CD4-positive, alpha-beta T cell (primary cell): ENCODE measurements at regions of chr3 and their contacts with region 1.

Region 1: GRCh38 chr3:158790901-158791589 is 10.8 kb upstream of the MFSD1 start:
- DNase-seq: peak in 7 of 14 experiments; percentile 5 to 79 (median 49)
- ATAC-seq: peak; percentile 79
- H3K4me3 ChIP-seq: no peak overlapping the region
- H3K4me3 Mint-ChIP-seq: no peak overlapping the region
- H3K27ac ChIP-seq: no peak overlapping the region
- H3K27ac Mint-ChIP-seq: no peak overlapping the region
- H3K4me1 ChIP-seq: no peaks in the 10 kb centered on the region
- H3K4me1 Mint-ChIP-seq: no peaks in the 10 kb centered on the region
- H3K27me3 ChIP-seq: no peaks in the 10 kb centered on the region
- H3K27me3 Mint-ChIP-seq: no peaks in the 10 kb centered on the region
- CTCF ChIP-seq: peak; percentile 91

Region 2: DNA sequence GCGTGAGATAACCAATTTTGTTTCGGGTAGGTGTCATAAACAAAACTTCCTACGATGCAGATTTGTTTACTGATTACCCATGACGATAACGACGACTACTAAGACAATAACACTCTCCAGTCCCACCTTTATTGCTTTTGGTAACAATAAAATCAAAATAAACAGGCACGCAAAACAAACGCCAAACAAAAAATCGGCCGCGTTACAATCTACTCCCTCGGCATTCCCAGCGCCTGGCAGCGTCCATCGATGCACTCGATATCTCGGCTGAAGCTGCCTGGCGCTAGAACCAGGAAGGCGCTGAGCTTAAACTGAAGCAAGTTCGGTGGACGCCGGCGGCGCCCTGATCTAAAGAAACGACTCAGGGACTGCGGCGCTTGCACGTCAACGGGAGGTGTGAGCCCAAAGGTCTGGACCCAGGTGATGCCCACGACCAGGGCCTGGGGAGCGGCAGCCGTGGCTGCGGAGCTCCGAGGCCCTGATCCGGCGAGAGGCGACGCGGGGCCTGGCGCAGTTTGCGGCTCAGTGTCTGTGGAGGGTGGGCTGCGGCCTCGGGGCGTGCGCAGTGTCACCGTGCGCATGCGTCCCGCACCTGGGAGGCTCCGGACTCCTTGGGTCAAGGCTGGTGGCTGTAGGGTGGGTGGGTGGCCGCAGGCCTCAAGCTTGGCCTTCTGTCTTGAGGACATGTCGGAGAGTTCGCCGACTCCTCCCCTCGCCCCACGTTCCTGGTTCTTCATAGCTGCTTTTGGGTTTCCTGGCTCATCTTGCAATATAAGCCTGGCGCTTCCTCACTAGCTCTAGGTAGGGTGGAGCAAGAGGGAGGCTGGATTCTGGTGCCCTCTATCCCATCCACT is 681.0 kb before region 1 on chr3 and contains the start of gene RSRC1:
- CTCF ChIA-PET with region 1: no interaction called
- POLR2A ChIA-PET with region 1: no interaction called
- intact Hi-C with region 1: loop called in 1 of 2 experiments (anchors 5 kb)
- DNase-seq: peak; percentile 62 to 89 (median 70)
- ATAC-seq: peak; percentile 87
- H3K4me3 ChIP-seq: peak within 1 kb of the TSS; percentile 80
- H3K4me3 Mint-ChIP-seq: peak within 1 kb of the TSS; percentile 96
- H3K27ac ChIP-seq: no peak within 1 kb of the TSS
- H3K27ac Mint-ChIP-seq: peak within 1 kb of the TSS; percentile 72
- H3K4me1 ChIP-seq: peaks cover 35% of the 10 kb centered on the region
- H3K4me1 Mint-ChIP-seq: peaks cover 79% of the 10 kb centered on the region
- H3K27me3 ChIP-seq: peaks cover 35 to 45% of the 10 kb centered on the region in 2 experiments
- H3K27me3 Mint-ChIP-seq: peaks cover 46% of the 10 kb centered on the region
- CTCF ChIP-seq: no peak
- total RNA-seq, gene RSRC1: 22.3 to 24.6 TPM

Region 3: GRCh38 chr3:158659454-158660237 is 131.4 kb before region 1 on chr3:
- CTCF ChIA-PET with region 1: interaction called, 16 read pairs
- POLR2A ChIA-PET with region 1: interaction called, 9 read pairs
- intact Hi-C with region 1: loop called (anchors 1 to 5 kb)
- DNase-seq: peak; percentile 10 to 71 (median 35)
- ATAC-seq: peak; percentile 88
- H3K4me3 ChIP-seq: no peak overlapping the region
- H3K4me3 Mint-ChIP-seq: no peak overlapping the region
- H3K27ac ChIP-seq: no peak overlapping the region
- H3K27ac Mint-ChIP-seq: no peak overlapping the region
- H3K4me1 ChIP-seq: no peaks in the 10 kb centered on the region
- H3K4me1 Mint-ChIP-seq: peaks cover 10% of the 10 kb centered on the region
- H3K27me3 ChIP-seq: no peaks in the 10 kb centered on the region
- H3K27me3 Mint-ChIP-seq: no peaks in the 10 kb centered on the region
- CTCF ChIP-seq: peak; percentile 73

Region 4: GRCh38 chr3:158801696-158802408 is 10.8 kb after region 1 on chr3 and contains the start of gene MFSD1:
- CTCF ChIA-PET with region 1: interaction called, 25 read pairs
- POLR2A ChIA-PET with region 1: interaction called, 9 read pairs
- intact Hi-C with region 1: no loop called
- DNase-seq: peak; percentile 71 to 95 (median 83)
- ATAC-seq: peak; percentile 91
- H3K4me3 ChIP-seq: peak within 1 kb of the TSS; percentile 89
- H3K4me3 Mint-ChIP-seq: peak within 1 kb of the TSS; percentile 92
- H3K27ac ChIP-seq: peak within 1 kb of the TSS; percentile 78 to 80
- H3K27ac Mint-ChIP-seq: peak within 1 kb of the TSS; percentile 91
- H3K4me1 ChIP-seq: peaks cover 18% of the 10 kb centered on the region
- H3K4me1 Mint-ChIP-seq: peaks cover 58% of the 10 kb centered on the region
- H3K27me3 ChIP-seq: no peaks in the 10 kb centered on the region
- H3K27me3 Mint-ChIP-seq: no peaks in the 10 kb centered on the region
- CTCF ChIP-seq: no peak
- total RNA-seq, gene MFSD1: 7.2 to 7.6 TPM

Region 5: GRCh38 chr3:159451067-159451466 is 660.0 kb after region 1 on chr3:
- CTCF ChIA-PET with region 1: no interaction called
- POLR2A ChIA-PET with region 1: no interaction called
- intact Hi-C with region 1: no loop called
- DNase-seq: no peak
- ATAC-seq: no peak
- H3K4me3 ChIP-seq: no peak overlapping the region
- H3K4me3 Mint-ChIP-seq: no peak overlapping the region
- H3K27ac ChIP-seq: no peak overlapping the region
- H3K27ac Mint-ChIP-seq: no peak overlapping the region
- H3K4me1 ChIP-seq: no peaks in the 10 kb centered on the region
- H3K4me1 Mint-ChIP-seq: no peaks in the 10 kb centered on the region
- H3K27me3 ChIP-seq: no peaks in the 10 kb centered on the region
- H3K27me3 Mint-ChIP-seq: no peaks in the 10 kb centered on the region
- CTCF ChIP-seq: no peak